ENCODE measurements at regions of chr1 and their contacts with region 1.

Region 1: DNA sequence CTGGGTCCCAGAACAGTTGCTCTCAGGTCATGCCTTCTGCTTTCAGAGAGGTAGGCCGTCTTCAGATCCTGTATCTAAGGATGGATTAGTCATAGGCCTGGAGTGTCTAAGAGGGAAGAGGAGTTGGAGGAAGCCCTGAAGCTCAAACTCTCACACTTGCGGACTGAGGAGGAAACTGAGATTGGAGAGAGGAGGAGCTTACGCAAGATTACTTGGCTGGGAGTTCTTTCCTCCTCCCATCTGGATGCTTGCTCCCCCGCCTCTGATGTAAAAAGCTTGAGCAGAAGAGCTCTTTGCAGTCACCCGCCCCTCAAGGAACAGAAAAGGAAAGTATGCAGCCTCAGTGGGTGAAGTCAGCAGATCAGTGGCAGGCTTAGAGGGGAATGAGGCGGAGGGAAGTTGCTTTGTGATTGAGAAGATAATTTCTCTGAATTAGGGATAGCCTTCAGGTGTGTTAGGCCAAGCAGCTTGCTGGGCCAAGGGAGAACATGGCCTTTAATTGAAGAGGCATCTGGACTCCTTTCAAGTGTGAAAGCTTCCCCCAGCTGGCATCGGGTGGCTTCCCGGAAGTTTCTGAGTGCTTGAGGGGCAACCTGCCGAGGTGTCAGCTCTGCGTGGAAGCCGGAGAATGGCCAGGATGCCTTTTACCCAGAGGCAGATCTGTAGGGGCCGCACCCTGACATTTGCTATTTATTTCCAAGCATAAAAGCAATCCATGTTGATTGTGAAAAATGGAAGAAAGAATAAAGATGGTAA is 6.6 kb downstream of the ADORA1 start:
- H3K4me3 ChIP-seq: no peak overlapping the region
- H3K27ac ChIP-seq: no peak overlapping the region
- H3K4me1 ChIP-seq: no peaks in the 10 kb centered on the region
- CTCF ChIP-seq: no peak

Region 2: GRCh38 chr1:203148125-203148524 is 14.0 kb after region 1 on chr1:
- CTCF ChIA-PET with region 1: interaction called, 13 read pairs
- POLR2A ChIA-PET with region 1: no interaction called
- H3K4me3 ChIP-seq: no peak overlapping the region
- H3K27ac ChIP-seq: no peak overlapping the region
- H3K4me1 ChIP-seq: no peaks in the 10 kb centered on the region; the same call in 1 of the 2 replicates
- CTCF ChIP-seq: no peak